Endothelial cell of umbilical vein (primary cell): ENCODE measurements at regions of chr11 and their contacts with region 1.

Region 1: DNA sequence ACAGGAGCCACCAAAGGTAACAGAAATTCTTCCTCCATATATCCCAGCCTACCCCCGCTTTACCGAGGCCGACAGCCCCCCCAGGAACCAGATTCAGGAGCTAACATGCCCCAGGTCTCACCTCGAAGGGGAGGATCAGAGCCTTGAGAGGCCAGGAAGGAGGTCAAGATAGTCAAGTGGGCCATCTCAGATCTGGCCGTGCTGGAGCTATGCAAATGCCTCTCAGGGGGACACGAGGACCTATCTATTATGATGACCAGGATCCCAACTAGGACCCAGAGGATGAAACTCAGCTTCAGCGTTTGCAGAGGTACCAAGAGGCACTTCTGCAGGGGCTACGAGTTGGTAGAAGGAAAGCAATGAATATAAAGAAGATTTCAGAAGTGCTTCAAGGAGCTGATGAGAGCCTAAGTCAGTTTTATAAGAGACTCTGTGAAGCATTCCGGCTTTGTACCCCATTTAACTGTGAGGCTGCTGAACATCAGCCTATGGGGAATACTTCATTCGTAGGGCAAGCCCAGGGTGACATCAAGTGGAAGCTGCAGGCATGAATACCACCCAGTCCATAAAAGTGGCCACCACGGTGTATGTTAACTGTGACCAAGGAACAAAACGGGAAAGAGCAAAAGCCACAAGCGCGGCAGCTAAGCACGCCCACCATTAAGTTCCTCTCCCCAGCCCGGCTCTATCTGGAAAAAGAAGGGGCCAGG is 27.7 kb upstream of the CPT1A start:
- DNase-seq: peak; percentile 65
- H3K4me3 ChIP-seq: peak overlapping the region; percentile 15 to 80 (median 69)
- H3K27ac ChIP-seq: no peak overlapping the region
- H3K4me1 ChIP-seq: peaks cover 11% of the 10 kb centered on the region
- H3K27me3 ChIP-seq: peaks cover 0 to 2% of the 10 kb centered on the region in 2 experiments
- CTCF ChIP-seq: peak in 1 of 2 donors; percentile 16
- POLR2A ChIP-seq: no peak

Region 2: DNA sequence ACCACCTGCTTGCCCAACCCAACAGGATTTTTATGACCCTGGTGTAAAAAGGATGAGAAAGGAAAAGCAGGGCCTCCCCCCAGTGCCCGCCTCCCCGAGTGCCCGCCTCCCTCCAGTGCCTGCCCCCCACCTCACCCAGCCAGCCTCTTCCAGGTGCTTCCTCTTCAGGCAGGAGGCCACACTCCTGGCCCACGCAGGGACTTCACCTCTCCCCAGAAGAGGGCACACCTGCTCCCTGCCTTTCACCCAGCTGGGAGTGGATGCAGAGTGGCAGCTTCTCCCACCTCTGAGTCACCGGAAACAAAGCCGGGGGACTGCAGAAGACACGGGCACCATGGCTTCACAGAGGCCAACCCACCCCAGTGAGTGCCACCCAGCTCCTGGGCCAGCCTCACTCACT is 43.8 kb before region 1 on chr11:
- CTCF ChIA-PET with region 1: no interaction called
- POLR2A ChIA-PET with region 1: no interaction called
- dilution Hi-C with region 1: no loop called
- intact Hi-C with region 1: loop called (anchors 5 kb)
- DNase-seq: peak; percentile 78
- H3K4me3 ChIP-seq: no peak overlapping the region
- H3K27ac ChIP-seq: no peak overlapping the region
- H3K4me1 ChIP-seq: no peaks in the 10 kb centered on the region
- H3K27me3 ChIP-seq: no peaks in the 10 kb centered on the region
- CTCF ChIP-seq: peak; percentile 10 to 52
- POLR2A ChIP-seq: no peak

Region 3: DNA sequence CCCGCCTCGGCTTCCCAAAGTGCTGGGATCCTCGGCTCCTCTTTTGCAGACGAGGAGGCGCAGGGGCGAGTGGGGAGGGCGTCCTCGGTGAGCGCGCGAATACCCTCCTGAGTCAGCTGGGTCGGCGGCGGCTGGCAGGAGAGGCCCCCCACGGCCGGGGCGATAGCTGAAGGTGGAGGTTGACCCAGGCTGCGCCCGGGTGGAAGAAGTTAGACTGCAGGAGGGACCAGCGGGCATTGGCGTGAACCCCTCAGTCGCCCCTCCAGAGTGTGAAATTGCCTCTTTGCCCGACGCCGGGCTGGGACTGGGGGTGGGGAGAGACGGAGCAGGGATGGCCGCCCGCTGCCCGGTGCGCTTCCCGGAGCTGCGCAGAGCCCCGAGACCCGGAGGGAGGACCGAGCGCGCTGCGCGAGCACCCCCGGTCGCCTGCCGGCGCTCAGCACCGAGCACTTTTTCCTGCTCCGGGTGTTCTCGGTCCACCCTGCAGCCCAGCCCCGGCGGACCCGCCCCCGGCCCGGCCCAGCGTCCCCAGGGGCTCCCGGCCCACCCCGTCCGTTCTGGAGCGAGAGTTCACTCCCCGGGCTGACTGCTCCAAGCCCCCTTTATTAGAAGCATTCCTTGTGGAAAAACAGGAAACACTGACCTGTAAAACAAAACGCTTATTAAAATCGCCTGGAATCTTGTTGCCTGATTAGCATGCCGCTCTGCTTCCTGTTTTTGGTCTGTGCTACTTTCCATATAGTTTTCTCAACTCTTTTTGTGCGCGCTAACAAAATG is 14.0 kb before region 1 on chr11:
- CTCF ChIA-PET with region 1: interaction called, 3 read pairs
- POLR2A ChIA-PET with region 1: no interaction called
- dilution Hi-C with region 1: no loop called
- intact Hi-C with region 1: loop called (anchors 1 kb)
- DNase-seq: peak; percentile 88
- H3K4me3 ChIP-seq: peak overlapping the region; percentile 37 to 63 (median 49)
- H3K27ac ChIP-seq: peak overlapping the region; percentile 17
- H3K4me1 ChIP-seq: peaks cover 12% of the 10 kb centered on the region
- H3K27me3 ChIP-seq: peaks cover 12 to 14% of the 10 kb centered on the region in 2 experiments
- CTCF ChIP-seq: no peak
- POLR2A ChIP-seq: no peak